ENCODE measurements at regions of chr10 and their contacts with region 1.

Region 1: GRCh38 chr10:48363617-48364355 is 57.3 kb downstream of the MAPK8 start:
- DNase-seq: peak; percentile 31
- CTCF ChIP-seq: peak; percentile 70

Region 2: DNA sequence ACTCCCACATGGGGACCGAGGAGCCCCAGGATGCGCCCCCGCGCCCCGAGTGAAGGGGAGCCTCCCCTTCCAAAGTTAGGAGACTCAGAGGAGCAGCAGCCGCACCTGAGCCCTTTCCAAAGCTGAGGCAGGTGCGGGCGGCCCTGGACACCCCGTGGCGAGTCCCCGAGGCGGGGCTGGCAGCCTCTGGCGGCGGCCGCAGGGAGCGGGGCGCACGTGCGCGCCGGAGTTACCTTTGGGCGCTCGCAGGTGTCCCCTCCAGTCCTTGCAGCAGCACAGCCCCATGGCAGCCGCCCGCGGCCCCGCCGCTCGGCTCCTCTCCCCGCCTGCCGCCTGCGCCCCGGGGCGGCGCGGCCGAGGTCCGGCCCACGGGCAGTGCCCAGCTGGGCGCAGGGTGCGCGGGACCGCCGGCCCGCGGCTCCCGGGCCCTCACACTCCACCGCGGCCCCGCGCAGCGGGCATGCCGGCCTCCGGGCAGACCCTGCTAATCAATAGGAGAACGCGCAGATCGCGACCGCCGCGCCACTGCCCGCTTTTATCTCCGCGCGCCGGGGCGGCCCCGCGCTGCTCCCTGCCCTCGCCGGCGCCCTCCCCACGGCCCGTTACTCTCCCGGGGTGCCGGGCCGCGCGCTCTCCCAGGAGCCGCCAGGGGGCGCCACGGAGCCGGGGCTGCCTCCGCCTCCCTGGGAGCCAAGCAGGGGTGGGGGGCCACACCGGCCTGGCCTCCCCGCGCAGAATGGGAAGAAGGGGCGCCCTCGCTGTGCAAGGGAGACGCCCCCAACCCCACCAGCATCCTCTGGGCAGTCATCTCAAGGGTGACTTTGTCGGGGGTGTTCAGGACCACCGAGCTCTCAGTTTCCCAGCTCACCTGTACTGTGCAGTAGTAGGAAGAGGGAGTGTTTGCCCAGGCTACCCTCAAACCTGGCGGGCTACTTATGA is 160.3 kb after region 1 on chr10:
- in situ Hi-C with region 1: loop called (anchors 25 kb)
- DNase-seq: peak; percentile 65
- CTCF ChIP-seq: peak; percentile 60

Measured in GM13977 (cell line).